ENCODE measurements at regions of chr6 and their contacts with region 1.

Region 1: GRCh38 chr6:143279385-143279784 is 171.1 kb downstream of the ADAT2 start:
- DNase-seq: no peak
- ATAC-seq: no peak
- H3K4me3 Mint-ChIP-seq: no peak overlapping the region
- H3K27ac Mint-ChIP-seq: no peak overlapping the region
- H3K4me1 Mint-ChIP-seq: peaks cover 7% of the 10 kb centered on the region
- H3K27me3 Mint-ChIP-seq: no peaks in the 10 kb centered on the region
- CTCF ChIP-seq: no peak

Region 2: DNA sequence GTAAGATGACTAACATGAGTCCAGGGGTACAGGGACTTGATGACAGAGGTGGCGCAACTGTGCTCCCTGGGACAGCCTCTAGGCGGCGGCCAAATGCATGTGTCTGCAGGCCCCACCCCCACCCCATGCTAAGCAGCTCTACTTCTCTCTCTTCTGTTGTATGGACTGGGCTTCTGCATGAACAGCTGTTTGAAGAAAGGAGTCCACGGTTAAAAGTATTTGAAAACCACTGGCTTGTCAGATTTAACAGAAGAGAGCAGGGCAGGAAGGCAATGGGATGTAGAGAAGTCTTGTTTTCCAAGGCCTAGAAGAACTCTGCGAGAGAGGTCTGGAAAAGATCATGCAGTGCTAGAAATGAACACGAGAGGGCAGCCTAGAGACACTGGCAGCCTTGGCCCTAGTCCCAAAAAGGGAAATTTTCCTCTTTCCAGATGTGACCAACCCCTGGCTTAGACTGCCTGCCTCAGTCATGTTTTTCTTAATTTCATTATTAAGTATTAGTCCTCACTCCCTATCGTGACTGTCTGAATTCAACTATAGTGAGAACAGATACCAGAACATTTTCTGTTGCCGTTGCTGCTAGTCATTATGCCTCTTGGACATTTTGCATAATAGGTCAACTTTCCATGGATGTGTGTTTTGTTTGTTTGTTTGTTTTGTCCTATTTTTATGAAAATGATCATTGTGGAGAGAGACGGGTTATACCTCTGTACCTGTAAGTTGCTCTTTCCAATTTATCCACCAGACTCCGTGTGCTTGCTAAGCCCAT is 712.6 kb before region 1 on chr6:
- CTCF ChIA-PET with region 1: no interaction called
- POLR2A ChIA-PET with region 1: no interaction called
- intact Hi-C with region 1: loop called (anchors 5 kb)
- DNase-seq: no peak
- ATAC-seq: peak; percentile 66
- H3K4me3 Mint-ChIP-seq: no peak overlapping the region
- H3K27ac Mint-ChIP-seq: no peak overlapping the region
- H3K4me1 Mint-ChIP-seq: no peaks in the 10 kb centered on the region
- H3K27me3 Mint-ChIP-seq: no peaks in the 10 kb centered on the region
- CTCF ChIP-seq: peak; percentile 79